Heart left ventricle (tissue), 16 donors: ENCODE measurements at regions of chr10 and their contacts with region 1.

Region 1: DNA sequence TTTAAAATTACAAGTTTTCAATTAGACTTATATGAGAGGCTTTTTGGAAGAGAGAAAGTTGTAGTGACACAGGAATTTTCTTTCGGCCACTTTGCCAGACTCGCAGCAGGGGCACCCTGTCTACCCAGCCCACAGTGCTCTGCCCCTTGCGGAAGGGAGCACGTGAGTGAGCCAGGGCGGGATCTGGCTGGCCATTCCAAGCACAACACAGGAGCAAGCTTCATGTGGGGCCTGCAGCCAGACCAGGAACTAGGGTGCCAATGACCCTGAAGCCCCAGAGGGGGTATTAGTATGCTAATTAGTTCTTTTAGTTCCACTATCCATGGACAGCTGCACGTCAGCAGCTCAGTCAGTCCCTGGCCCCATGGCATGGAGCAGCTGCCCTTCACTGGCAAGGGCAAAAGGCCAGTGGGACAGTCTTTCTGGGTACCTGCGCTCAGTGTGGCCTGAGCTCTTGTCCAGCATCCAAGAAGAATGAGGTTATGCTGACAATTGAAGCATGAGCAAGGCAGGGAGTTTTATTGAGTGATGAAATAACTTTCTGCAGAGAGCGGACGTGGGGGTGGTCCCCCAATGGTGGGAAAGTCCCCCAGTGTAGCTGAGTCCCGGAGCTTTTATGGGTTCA is 251.1 kb upstream of the CSTF2T start:
- DNase-seq: peak in 2 of 5 donors; percentile 27 to 30
- ATAC-seq: peak; percentile 32 to 63 (median 48)
- H3K4me3 ChIP-seq: no peak overlapping the region
- H3K27ac ChIP-seq: peak overlapping the region in 4 of 12 donors; percentile 16 to 30 (median 23)
- H3K4me1 ChIP-seq: peaks cover 0 to 27% (median 12%) of the 10 kb centered on the region in 12 donors
- H3K27me3 ChIP-seq: no peaks in the 10 kb centered on the region
- CTCF ChIP-seq: no peak
- POLR2A ChIP-seq: no peak

Region 2: GRCh38 chr10:51001587-51001986 is 948.9 kb before region 1 on chr10:
- intact Hi-C with region 1: loop called in 3 of 10 experiments (anchors 10 kb)
- DNase-seq: no peak
- ATAC-seq: peak in 3 of 4 donors; percentile 55 to 70 (median 67)
- H3K4me3 ChIP-seq: no peak overlapping the region
- H3K27ac ChIP-seq: peak overlapping the region in 5 of 12 donors; percentile 17 to 53 (median 26)
- H3K4me1 ChIP-seq: peaks cover 0 to 63% (median 6%) of the 10 kb centered on the region in 12 donors
- H3K27me3 ChIP-seq: no peaks in the 10 kb centered on the region
- CTCF ChIP-seq: peak; percentile 38 to 75 (median 59)
- POLR2A ChIP-seq: no peak

Region 3: GRCh38 chr10:51389415-51390321 is 560.8 kb before region 1 on chr10:
- intact Hi-C with region 1: loop called in 1 of 10 experiments (anchors 10 kb)
- DNase-seq: peak; percentile 37 to 60 (median 46)
- ATAC-seq: peak; percentile 55 to 80 (median 73)
- H3K4me3 ChIP-seq: no peak overlapping the region
- H3K27ac ChIP-seq: peak overlapping the region in 3 of 12 donors; percentile 10 to 19 (median 19)
- H3K4me1 ChIP-seq: peaks cover 0 to 23% (median 6%) of the 10 kb centered on the region in 12 donors
- H3K27me3 ChIP-seq: no peaks in the 10 kb centered on the region
- CTCF ChIP-seq: peak; percentile 53 to 81 (median 74)
- POLR2A ChIP-seq: no peak

Region 4: GRCh38 chr10:51729822-51730555 is 220.5 kb before region 1 on chr10:
- intact Hi-C with region 1: loop called in 1 of 10 experiments (anchors 10 kb)
- DNase-seq: no peak
- ATAC-seq: no peak
- H3K4me3 ChIP-seq: no peak overlapping the region
- H3K27ac ChIP-seq: no peak overlapping the region
- H3K4me1 ChIP-seq: peaks cover 0 to 5% (median 0%) of the 10 kb centered on the region in 12 donors
- H3K27me3 ChIP-seq: no peaks in the 10 kb centered on the region
- CTCF ChIP-seq: no peak
- POLR2A ChIP-seq: no peak

Region 5: DNA sequence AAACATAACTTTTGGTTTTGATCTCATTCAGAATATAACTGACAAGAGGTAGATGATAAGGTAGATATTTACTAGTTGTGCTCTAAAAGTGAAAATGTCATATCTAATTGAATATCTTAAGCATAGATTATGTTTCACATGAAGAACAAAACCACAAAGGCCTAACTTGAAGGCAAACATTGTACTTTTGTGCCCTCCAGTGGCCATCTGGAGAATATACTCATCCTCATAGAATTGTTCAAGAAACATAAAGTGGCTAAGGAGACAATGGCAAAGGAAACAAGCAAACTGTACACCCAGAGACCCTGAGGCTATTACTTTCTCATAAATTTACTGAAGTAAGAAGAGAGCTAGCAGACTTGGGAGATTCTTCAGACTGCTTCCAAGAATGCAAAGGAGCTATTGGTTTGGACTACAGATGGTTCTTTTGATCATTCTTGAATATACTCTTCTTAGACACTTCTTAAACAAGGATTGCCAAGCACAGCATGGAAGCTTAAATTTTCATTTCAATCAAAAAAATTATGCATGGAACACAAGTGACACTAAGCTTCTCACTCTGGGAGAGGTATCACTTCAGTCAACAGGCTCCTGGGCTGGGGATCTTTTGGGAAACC is 265.4 kb after region 1 on chr10:
- intact Hi-C with region 1: loop called in 1 of 10 experiments (anchors 10 kb)
- DNase-seq: peak in 3 of 5 donors; percentile 23 to 32 (median 25)
- ATAC-seq: peak in 3 of 4 donors; percentile 44 to 60 (median 55)
- H3K4me3 ChIP-seq: no peak overlapping the region
- H3K27ac ChIP-seq: peak overlapping the region in 1 of 12 donors; percentile 17
- H3K4me1 ChIP-seq: peaks cover 0 to 11% (median 0%) of the 10 kb centered on the region in 12 donors
- H3K27me3 ChIP-seq: no peaks in the 10 kb centered on the region
- CTCF ChIP-seq: peak; percentile 56 to 79 (median 75)
- POLR2A ChIP-seq: no peak